ENCODE measurements at regions of chr9 and their contacts with region 1.

Region 1: GRCh38 chr9:91659529-91660495 is 236.2 kb upstream of the NFIL3 start:
- DNase-seq: no peak
- ATAC-seq: no peak
- H3K4me3 ChIP-seq: no peak overlapping the region
- H3K4me3 Mint-ChIP-seq: no peak overlapping the region
- H3K27ac ChIP-seq: no peak overlapping the region
- H3K27ac Mint-ChIP-seq: no peak overlapping the region
- H3K4me1 ChIP-seq: no peaks in the 10 kb centered on the region
- H3K4me1 Mint-ChIP-seq: no peaks in the 10 kb centered on the region
- H3K27me3 ChIP-seq: peaks cover 0 to 10% (median 0%) of the 10 kb centered on the region in 4 experiments
- H3K27me3 Mint-ChIP-seq: peaks cover 25% of the 10 kb centered on the region
- CTCF ChIP-seq: no peak

Region 2: DNA sequence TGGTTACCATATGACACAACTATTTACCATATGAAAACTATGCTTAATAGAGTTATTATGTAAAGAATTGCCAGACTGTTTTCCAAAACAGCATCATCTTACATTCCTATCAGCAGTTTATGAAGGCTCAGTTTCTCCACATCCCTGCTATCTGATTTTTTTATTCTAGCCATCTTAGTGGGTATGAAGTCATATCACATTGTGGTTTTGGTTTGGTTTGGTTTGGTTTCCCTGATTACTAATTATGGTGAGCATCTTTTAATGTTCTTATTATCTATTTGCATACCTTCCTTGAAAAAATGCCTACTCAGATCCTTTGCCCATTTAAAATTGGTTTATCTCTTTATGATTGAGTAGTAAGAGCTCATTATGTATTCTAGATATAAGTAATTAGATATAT is 36.8 kb before region 1 on chr9:
- CTCF ChIA-PET with region 1: no interaction called
- POLR2A ChIA-PET with region 1: no interaction called
- intact Hi-C with region 1: no loop called
- DNase-seq: no peak
- ATAC-seq: no peak
- H3K4me3 ChIP-seq: no peak overlapping the region
- H3K4me3 Mint-ChIP-seq: no peak overlapping the region
- H3K27ac ChIP-seq: no peak overlapping the region
- H3K27ac Mint-ChIP-seq: no peak overlapping the region
- H3K4me1 ChIP-seq: no peaks in the 10 kb centered on the region
- H3K4me1 Mint-ChIP-seq: no peaks in the 10 kb centered on the region
- H3K27me3 ChIP-seq: peaks cover 0 to 3% (median 0%) of the 10 kb centered on the region in 4 experiments
- H3K27me3 Mint-ChIP-seq: peaks cover 22% of the 10 kb centered on the region
- CTCF ChIP-seq: no peak

Region 3: DNA sequence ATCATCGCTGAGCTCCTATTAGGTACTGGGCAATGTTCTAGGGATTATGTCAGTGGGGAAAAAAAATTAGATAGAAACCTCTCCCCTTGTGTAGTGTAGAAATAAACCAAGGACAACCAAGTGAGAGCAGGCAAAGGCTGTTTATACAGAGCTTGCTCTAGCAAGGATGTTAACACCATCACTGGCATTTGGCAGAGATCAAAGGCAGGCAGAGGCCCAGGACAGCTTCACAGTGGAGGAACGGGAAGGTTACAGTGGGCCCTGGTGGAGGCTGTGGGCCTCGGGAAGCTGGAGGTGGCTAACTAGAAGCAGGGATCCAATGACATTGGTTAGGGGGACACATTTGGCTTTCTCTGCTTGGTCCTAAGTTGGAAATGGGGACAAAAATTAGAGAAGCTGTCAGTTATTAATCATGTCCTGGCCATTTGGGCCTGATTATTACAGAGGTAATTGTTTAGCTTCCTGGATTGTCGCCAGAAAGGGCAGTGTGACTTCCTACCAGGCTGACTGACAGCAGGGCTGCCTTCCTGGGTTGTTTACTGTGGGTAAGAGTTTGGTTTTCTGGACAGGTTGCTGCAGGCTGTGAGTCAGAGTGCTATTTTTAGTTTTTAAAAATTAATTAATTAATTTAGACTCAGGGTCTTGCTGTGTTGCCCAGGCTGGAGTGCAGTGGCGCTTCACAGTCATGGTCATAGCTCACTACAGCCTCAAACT is 30.9 kb after region 1 on chr9:
- CTCF ChIA-PET with region 1: no interaction called
- POLR2A ChIA-PET with region 1: no interaction called
- intact Hi-C with region 1: no loop called
- DNase-seq: no peak
- ATAC-seq: no peak
- H3K4me3 ChIP-seq: no peak overlapping the region
- H3K4me3 Mint-ChIP-seq: no peak overlapping the region
- H3K27ac ChIP-seq: no peak overlapping the region
- H3K27ac Mint-ChIP-seq: no peak overlapping the region
- H3K4me1 ChIP-seq: no peaks in the 10 kb centered on the region
- H3K4me1 Mint-ChIP-seq: no peaks in the 10 kb centered on the region
- H3K27me3 ChIP-seq: no peaks in the 10 kb centered on the region
- H3K27me3 Mint-ChIP-seq: peaks cover 3% of the 10 kb centered on the region
- CTCF ChIP-seq: no peak

Region 4: GRCh38 chr9:91727316-91727861 is 67.6 kb after region 1 on chr9:
- CTCF ChIA-PET with region 1: interaction called, 10 read pairs
- POLR2A ChIA-PET with region 1: no interaction called
- intact Hi-C with region 1: loop called (anchors 2 kb)
- DNase-seq: peak; percentile 67
- ATAC-seq: peak; percentile 89
- H3K4me3 ChIP-seq: no peak overlapping the region
- H3K4me3 Mint-ChIP-seq: no peak overlapping the region
- H3K27ac ChIP-seq: no peak overlapping the region
- H3K27ac Mint-ChIP-seq: no peak overlapping the region
- H3K4me1 ChIP-seq: no peaks in the 10 kb centered on the region
- H3K4me1 Mint-ChIP-seq: no peaks in the 10 kb centered on the region
- H3K27me3 ChIP-seq: no peaks in the 10 kb centered on the region
- H3K27me3 Mint-ChIP-seq: no peaks in the 10 kb centered on the region
- CTCF ChIP-seq: peak; percentile 79

Region 5: GRCh38 chr9:91991721-91992341 is 332.0 kb after region 1 on chr9:
- CTCF ChIA-PET with region 1: no interaction called
- POLR2A ChIA-PET with region 1: no interaction called
- intact Hi-C with region 1: no loop called
- DNase-seq: no peak
- ATAC-seq: no peak
- H3K4me3 ChIP-seq: no peak overlapping the region
- H3K4me3 Mint-ChIP-seq: no peak overlapping the region
- H3K27ac ChIP-seq: no peak overlapping the region
- H3K27ac Mint-ChIP-seq: no peak overlapping the region
- H3K4me1 ChIP-seq: no peaks in the 10 kb centered on the region
- H3K4me1 Mint-ChIP-seq: no peaks in the 10 kb centered on the region
- H3K27me3 ChIP-seq: no peaks in the 10 kb centered on the region
- H3K27me3 Mint-ChIP-seq: peaks cover 17% of the 10 kb centered on the region
- CTCF ChIP-seq: no peak

Measured in B cell (primary cell).